ENCODE measurements at regions of chr6 and their contacts with region 1.

Region 1: GRCh38 chr6:47536816-47537401 is 59.3 kb downstream of the CD2AP start:
- DNase-seq: no peak
- ATAC-seq: no peak
- H3K4me3 ChIP-seq: no peak overlapping the region
- H3K27ac ChIP-seq: no peak overlapping the region
- H3K4me1 ChIP-seq: no peaks in the 10 kb centered on the region
- H3K27me3 ChIP-seq: no peaks in the 10 kb centered on the region
- CTCF ChIP-seq: no peak
- POLR2A ChIP-seq: no peak
- RAD21 ChIP-seq: no peak

Region 2: GRCh38 chr6:47567586-47567985 is 30.7 kb after region 1 on chr6:
- CTCF ChIA-PET with region 1: no interaction called
- POLR2A ChIA-PET with region 1: no interaction called
- dilution Hi-C with region 1: no loop called
- in situ Hi-C with region 1: no loop called
- intact Hi-C with region 1: loop called (anchors 1 kb)
- DNase-seq: no peak
- ATAC-seq: no peak
- H3K4me3 ChIP-seq: no peak overlapping the region
- H3K27ac ChIP-seq: no peak overlapping the region
- H3K4me1 ChIP-seq: no peaks in the 10 kb centered on the region
- H3K27me3 ChIP-seq: no peaks in the 10 kb centered on the region
- CTCF ChIP-seq: no peak
- POLR2A ChIP-seq: no peak
- RAD21 ChIP-seq: no peak

Region 3: DNA sequence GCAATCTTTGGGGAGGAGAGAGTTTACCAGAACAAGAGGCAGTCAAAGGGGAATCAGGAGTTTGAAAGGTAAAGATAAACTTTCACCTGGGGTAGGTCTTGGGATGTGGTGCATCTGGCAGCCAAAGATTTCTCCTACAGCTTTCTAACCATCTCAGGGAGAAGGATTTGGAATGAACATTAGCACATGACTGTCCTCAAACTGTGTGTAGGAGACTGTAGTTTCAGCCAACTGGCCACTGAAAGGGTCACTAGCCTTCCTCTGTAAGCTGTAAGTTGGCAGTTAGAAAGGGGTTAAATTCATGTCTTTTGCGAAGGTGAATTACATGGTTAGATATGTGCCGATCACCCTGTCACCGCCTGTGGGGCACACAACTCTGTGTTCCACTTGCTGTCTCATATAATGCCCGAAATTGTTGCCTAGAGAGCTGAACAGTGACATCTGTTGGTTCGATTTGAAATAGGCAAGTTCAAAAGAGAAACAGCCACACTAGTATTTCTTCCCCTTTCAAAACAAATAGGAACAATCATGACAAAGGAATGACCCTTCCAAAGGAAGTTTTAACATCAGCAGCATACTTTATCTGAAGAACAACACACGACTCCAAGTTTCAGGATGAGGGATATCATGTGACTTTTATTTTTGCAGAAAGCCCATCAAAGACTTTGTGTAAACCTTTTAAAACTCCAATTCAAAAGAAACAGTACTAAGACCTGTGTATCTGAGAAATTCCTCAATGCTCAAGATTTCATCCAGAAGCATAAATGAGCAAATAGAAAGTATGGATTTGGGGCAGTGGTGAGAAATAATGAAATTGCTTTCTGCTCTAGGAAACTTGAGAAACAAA is 243.8 kb after region 1 on chr6:
- CTCF ChIA-PET with region 1: no interaction called
- POLR2A ChIA-PET with region 1: no interaction called
- dilution Hi-C with region 1: no loop called
- in situ Hi-C with region 1: no loop called
- intact Hi-C with region 1: no loop called
- DNase-seq: peak; percentile 73
- ATAC-seq: peak; percentile 98
- H3K4me3 ChIP-seq: no peak overlapping the region
- H3K27ac ChIP-seq: no peak overlapping the region
- H3K4me1 ChIP-seq: no peaks in the 10 kb centered on the region
- H3K27me3 ChIP-seq: peaks cover 3% of the 10 kb centered on the region; the same call in 1 of the 2 replicates
- CTCF ChIP-seq: peak; percentile 76
- POLR2A ChIP-seq: no peak
- RAD21 ChIP-seq: peak; percentile 66